ENCODE measurements at regions of chr11 and their contacts with region 1.

Region 1: GRCh38 chr11:41461057-41461681 is 1.7 kb upstream of the LRRC4C start:
- DNase-seq: no peak

Region 2: DNA sequence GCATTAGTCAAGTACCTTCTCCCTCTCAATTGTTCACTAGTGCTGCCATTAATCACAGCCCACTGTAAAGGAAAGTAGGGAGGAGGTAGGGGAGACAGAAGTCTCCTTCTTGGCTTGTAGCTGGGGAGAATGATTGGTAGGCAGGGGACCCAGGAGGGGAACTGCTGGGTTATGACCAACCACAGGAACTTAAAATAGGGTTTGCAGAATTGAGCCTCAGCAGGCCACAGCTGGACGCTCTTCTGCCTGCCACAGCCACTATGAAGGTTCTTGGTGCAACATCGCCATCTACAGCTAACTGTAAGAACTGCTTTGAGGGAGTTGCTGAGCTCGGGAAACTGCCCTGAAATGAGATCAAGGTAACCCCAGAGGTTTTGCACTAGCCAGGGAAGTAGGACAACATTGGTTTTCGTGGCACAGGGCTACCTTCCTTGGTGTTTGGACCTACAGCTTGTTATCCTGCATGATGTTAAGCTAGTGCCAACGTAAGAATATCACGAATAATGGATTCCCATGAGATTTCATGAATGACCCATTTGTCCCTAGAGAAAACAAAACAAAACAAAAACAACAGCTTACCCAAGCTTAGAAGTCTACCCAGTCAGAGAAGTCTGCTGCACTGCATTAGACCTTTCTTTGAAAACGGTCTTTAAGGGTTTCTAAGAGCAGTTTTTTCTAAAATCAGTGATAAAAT is 1063.5 kb after region 1 on chr11:
- intact Hi-C with region 1: loop called (anchors 10 kb)
- DNase-seq: no peak

Region 3: DNA sequence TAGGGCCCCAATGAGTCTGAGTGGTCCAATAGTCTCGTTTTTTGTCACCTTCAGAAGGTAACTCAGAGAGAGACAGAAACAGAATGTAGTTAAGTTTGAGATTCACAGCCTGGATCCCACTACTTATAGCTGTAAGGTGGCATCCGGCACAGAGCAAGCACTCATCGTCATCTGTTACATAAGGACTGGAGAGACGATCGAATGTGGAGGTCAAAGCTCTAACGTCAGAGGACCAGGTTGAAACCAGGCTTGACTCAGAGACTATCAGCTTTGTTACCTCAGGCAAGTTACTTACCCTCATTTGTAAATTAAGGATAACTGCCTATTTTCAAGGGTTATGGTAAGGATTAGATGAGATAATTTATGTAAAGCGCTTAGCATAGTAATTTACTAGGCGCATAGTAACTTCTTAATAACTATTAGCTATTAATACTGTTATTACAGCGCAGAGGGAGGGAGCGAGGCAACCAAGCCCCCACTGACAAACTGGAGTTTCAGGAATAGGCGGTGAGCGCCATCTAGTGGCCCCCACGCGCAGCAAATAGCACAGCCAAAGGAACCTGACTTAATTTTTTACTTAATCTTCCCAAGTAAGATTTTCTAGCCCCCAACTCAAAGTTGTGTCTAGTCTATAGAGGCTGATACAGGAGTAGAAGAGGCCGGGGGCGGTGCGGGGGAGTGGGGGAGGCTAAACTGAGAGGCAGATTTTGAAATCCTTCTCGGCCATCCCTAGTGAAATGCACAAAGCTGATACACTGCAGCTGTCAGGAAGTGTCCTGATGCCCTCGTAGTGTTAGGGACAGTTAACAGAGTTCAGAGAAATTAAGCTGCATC is 1821.7 kb after region 1 on chr11:
- intact Hi-C with region 1: loop called (anchors 10 kb)
- DNase-seq: no peak